ENCODE measurements at regions of chr1 and their contacts with region 1.

Region 1: GRCh38 chr1:160519642-160520435 is 3.2 kb downstream of the SLAMF6 start:
- DNase-seq: peak in 4 of 14 experiments; percentile 50 to 75 (median 67)
- ATAC-seq: peak; percentile 64
- H3K4me3 ChIP-seq: peak overlapping the region; percentile 70
- H3K4me3 Mint-ChIP-seq: peak overlapping the region; percentile 96
- H3K27ac ChIP-seq: peak overlapping the region; percentile 36 to 47
- H3K27ac Mint-ChIP-seq: peak overlapping the region; percentile 99
- H3K4me1 ChIP-seq: peaks cover 4% of the 10 kb centered on the region
- H3K4me1 Mint-ChIP-seq: peaks cover 97% of the 10 kb centered on the region
- H3K27me3 ChIP-seq: no peaks in the 10 kb centered on the region
- H3K27me3 Mint-ChIP-seq: no peaks in the 10 kb centered on the region
- CTCF ChIP-seq: peak; percentile 15

Region 2: GRCh38 chr1:160342953-160343869 is 176.6 kb before region 1 on chr1 and contains the starts of genes COPA and NCSTN:
- CTCF ChIA-PET with region 1: no interaction called
- POLR2A ChIA-PET with region 1: interaction called, 3 read pairs
- intact Hi-C with region 1: loop called in 1 of 2 experiments (anchors 10 kb)
- DNase-seq: peak; percentile 79 to 96 (median 84)
- ATAC-seq: peak; percentile 98
- H3K4me3 ChIP-seq: peak within 1 kb of the TSS; percentile 96
- H3K4me3 Mint-ChIP-seq: peak within 1 kb of the TSS; percentile 100
- H3K27ac ChIP-seq: peak within 1 kb of the TSS; percentile 88 to 94
- H3K27ac Mint-ChIP-seq: peak within 1 kb of the TSS; percentile 97
- H3K4me1 ChIP-seq: peaks cover 18% of the 10 kb centered on the region
- H3K4me1 Mint-ChIP-seq: peaks cover 69% of the 10 kb centered on the region
- H3K27me3 ChIP-seq: no peaks in the 10 kb centered on the region
- H3K27me3 Mint-ChIP-seq: no peaks in the 10 kb centered on the region
- CTCF ChIP-seq: no peak
- total RNA-seq, gene COPA: 95.0 to 107 TPM
- total RNA-seq, gene NCSTN: 54.9 to 56.6 TPM

Region 3: DNA sequence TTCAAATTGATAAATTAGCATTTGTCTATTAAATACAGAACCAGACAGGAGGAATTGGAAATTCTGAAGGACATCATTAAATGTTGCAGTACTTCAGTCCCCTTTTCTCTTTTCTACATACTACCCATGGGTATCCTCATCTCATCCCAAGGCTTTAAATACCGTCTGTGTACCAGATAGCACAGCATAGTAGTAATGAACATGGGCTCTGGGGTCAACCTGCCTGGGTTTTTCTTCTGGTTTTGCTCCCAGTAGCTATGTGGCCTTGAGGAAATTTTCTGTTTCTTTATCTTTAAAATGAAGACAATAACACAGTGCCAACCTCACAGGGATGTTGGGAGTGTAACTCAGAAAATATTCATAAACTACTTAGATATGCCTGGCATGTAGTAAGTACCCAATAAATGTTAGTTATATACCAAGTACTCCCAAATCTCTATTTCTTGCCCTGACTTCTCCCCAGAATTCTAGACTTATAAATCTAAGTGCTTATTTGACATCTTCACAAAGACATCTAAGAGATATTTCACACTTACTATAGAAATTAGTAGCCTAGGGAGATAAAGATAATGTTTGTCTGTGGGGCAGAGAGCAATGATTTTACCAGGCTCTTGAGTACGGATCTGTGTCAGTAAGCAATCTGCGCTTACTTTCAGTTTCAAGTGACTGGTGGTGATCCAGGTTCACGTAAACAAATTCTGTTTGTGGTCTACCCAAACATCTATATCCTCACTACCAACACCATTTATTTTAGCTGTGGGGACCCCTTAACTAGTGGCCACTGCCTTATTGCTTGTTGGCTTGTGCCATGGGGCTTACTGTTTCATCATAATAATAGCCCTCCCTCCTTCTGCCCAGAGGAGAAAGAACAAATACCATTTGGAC is 82.2 kb before region 1 on chr1:
- CTCF ChIA-PET with region 1: no interaction called
- POLR2A ChIA-PET with region 1: no interaction called
- intact Hi-C with region 1: loop called (anchors 2 to 5 kb)
- DNase-seq: peak in 4 of 14 experiments; percentile 29 to 77 (median 74)
- ATAC-seq: peak; percentile 84
- H3K4me3 ChIP-seq: peak overlapping the region; percentile 49
- H3K4me3 Mint-ChIP-seq: peak overlapping the region; percentile 89
- H3K27ac ChIP-seq: peak overlapping the region; percentile 69 to 81
- H3K27ac Mint-ChIP-seq: peak overlapping the region; percentile 94
- H3K4me1 ChIP-seq: peaks cover 19% of the 10 kb centered on the region
- H3K4me1 Mint-ChIP-seq: peaks cover 53% of the 10 kb centered on the region
- H3K27me3 ChIP-seq: no peaks in the 10 kb centered on the region
- H3K27me3 Mint-ChIP-seq: no peaks in the 10 kb centered on the region
- CTCF ChIP-seq: no peak

Region 4: GRCh38 chr1:160539990-160540858 is 20.4 kb after region 1 on chr1:
- CTCF ChIA-PET with region 1: interaction called, 4 read pairs
- POLR2A ChIA-PET with region 1: interaction called, 20 read pairs
- intact Hi-C with region 1: loop called in 1 of 2 experiments (anchors 2 kb)
- DNase-seq: peak in 12 of 14 experiments; percentile 19 to 91 (median 34)
- ATAC-seq: peak; percentile 90
- H3K4me3 ChIP-seq: peak overlapping the region; percentile 13
- H3K4me3 Mint-ChIP-seq: peak overlapping the region; percentile 59
- H3K27ac ChIP-seq: peak overlapping the region; percentile 54 to 68
- H3K27ac Mint-ChIP-seq: peak overlapping the region; percentile 88
- H3K4me1 ChIP-seq: peaks cover 55% of the 10 kb centered on the region
- H3K4me1 Mint-ChIP-seq: peaks cover 64% of the 10 kb centered on the region
- H3K27me3 ChIP-seq: no peaks in the 10 kb centered on the region
- H3K27me3 Mint-ChIP-seq: no peaks in the 10 kb centered on the region
- CTCF ChIP-seq: no peak

Region 5: DNA sequence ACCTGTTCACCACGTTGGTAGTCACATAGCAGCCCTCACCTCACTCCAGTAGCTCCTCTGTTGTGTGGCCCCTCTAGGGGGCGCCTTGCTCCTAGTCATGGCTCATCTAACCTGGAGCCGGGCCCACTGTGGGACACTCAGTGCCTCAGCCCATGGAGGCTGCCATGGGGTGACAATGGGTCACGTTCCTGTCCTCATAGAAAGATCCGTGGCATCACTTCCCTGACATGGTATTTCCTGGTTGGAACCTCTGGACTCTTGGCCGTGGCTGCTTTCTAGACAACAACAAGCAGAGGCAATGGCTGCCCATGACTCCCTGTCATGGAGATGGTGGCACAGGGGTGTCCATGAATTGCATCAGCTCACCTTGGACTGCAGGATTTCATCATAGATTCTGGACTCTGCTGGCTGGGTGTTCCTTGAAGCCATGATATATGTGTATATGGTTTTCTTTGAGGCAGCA is 30.8 kb after region 1 on chr1:
- CTCF ChIA-PET with region 1: no interaction called
- POLR2A ChIA-PET with region 1: interaction called, 3 read pairs
- intact Hi-C with region 1: loop called in 1 of 2 experiments (anchors 5 kb)
- DNase-seq: peak; percentile 34 to 78 (median 54)
- ATAC-seq: peak; percentile 71
- H3K4me3 ChIP-seq: no peak overlapping the region
- H3K4me3 Mint-ChIP-seq: no peak overlapping the region
- H3K27ac ChIP-seq: no peak overlapping the region
- H3K27ac Mint-ChIP-seq: peak overlapping the region; percentile 58
- H3K4me1 ChIP-seq: peaks cover 14% of the 10 kb centered on the region
- H3K4me1 Mint-ChIP-seq: peaks cover 33% of the 10 kb centered on the region
- H3K27me3 ChIP-seq: no peaks in the 10 kb centered on the region
- H3K27me3 Mint-ChIP-seq: no peaks in the 10 kb centered on the region
- CTCF ChIP-seq: peak; percentile 53

Region 6: DNA sequence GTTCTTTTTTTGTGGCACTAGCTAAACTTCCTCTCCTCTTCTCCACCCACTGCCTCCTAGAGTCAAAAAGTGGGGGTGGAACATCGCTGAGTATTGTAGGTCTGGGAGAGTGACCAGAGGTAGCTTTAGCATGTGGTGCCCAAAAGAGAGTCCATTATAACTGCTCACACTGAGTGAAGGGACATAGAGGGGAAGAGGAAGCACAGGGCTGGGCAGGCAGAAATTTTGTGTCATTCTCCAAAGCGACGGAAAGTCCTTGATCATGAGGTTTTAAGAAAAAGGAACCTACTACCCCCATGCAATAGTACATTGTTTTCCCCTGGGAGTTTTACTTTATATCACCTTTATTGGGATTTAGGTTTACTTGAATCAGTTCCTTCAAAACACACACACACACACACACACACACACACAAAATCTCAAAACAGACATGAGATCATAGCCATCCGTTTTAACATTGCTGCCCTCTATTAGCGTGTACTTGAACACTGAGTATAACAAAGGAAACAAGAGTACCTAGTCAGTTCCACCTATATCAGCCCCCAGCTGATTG is 55.3 kb after region 1 on chr1:
- CTCF ChIA-PET with region 1: no interaction called
- POLR2A ChIA-PET with region 1: interaction called, 13 read pairs
- intact Hi-C with region 1: loop called in 1 of 2 experiments (anchors 5 kb)
- DNase-seq: peak in 2 of 14 experiments; percentile 53 to 57
- ATAC-seq: peak; percentile 21
- H3K4me3 ChIP-seq: peak overlapping the region; percentile 56
- H3K4me3 Mint-ChIP-seq: peak overlapping the region; percentile 94
- H3K27ac ChIP-seq: peak overlapping the region; percentile 29 to 60
- H3K27ac Mint-ChIP-seq: peak overlapping the region; percentile 87
- H3K4me1 ChIP-seq: peaks cover 66% of the 10 kb centered on the region
- H3K4me1 Mint-ChIP-seq: peaks cover 96% of the 10 kb centered on the region
- H3K27me3 ChIP-seq: no peaks in the 10 kb centered on the region
- H3K27me3 Mint-ChIP-seq: no peaks in the 10 kb centered on the region
- CTCF ChIP-seq: no peak

Region 7: GRCh38 chr1:160584784-160585183 is 64.9 kb after region 1 on chr1:
- CTCF ChIA-PET with region 1: no interaction called
- POLR2A ChIA-PET with region 1: interaction called, 12 read pairs
- intact Hi-C with region 1: loop called in 1 of 2 experiments (anchors 5 kb)
- DNase-seq: no peak
- ATAC-seq: no peak
- H3K4me3 ChIP-seq: no peak overlapping the region
- H3K4me3 Mint-ChIP-seq: peak overlapping the region; percentile 2
- H3K27ac ChIP-seq: no peak overlapping the region
- H3K27ac Mint-ChIP-seq: no peak overlapping the region
- H3K4me1 ChIP-seq: peaks cover 18% of the 10 kb centered on the region
- H3K4me1 Mint-ChIP-seq: peaks cover 64% of the 10 kb centered on the region
- H3K27me3 ChIP-seq: no peaks in the 10 kb centered on the region
- H3K27me3 Mint-ChIP-seq: no peaks in the 10 kb centered on the region
- CTCF ChIP-seq: no peak